ENCODE measurements at regions of chr7 and their contacts with region 1.

Region 1: GRCh38 chr7:47786557-47787248 is 161.6 kb downstream of the PKD1L1 start:
- DNase-seq: peak; percentile 88
- H3K4me3 ChIP-seq: no peak overlapping the region
- H3K27ac ChIP-seq: peak overlapping the region; percentile 79 to 88 (median 82)
- H3K4me1 ChIP-seq: peaks cover 0 to 59% (median 55%) of the 10 kb centered on the region in 4 donors
- H3K27me3 ChIP-seq: no peaks in the 10 kb centered on the region
- CTCF ChIP-seq: no peak
- EP300 ChIP-seq: peak in 1 of 4 donors; percentile 3
- POLR2A ChIP-seq: no peak

Region 2: DNA sequence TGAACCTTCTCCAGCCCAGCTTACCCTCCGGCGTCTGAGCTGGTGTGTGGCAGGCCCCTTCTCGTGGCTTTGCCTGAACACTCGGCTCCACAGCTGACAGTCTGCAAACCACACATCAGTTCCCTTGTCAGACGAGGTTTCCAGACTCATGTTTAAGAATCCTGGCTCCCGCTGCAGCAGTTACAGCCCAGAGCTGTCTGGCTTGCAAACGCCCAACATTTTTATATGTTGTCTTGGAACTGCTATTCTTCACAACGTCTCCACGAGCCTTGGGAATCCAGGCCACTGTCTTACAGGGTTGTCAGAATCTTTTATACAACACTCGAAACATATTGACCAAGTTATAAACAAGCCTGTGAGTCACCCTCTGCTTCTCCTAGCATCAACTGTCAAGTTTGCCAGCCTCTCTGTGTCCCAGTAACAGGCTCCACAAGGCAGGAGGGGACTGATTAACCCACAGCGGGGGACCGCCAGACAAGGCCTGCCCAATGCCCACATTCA is 272.9 kb before region 1 on chr7:
- intact Hi-C with region 1: loop called (anchors 10 kb)
- DNase-seq: peak; percentile 80
- H3K4me3 ChIP-seq: no peak overlapping the region
- H3K27ac ChIP-seq: peak overlapping the region; percentile 45 to 74 (median 72)
- H3K4me1 ChIP-seq: peaks cover 0 to 73% (median 64%) of the 10 kb centered on the region in 4 donors
- H3K27me3 ChIP-seq: no peaks in the 10 kb centered on the region
- CTCF ChIP-seq: no peak
- EP300 ChIP-seq: peak in 1 of 4 donors; percentile 20
- POLR2A ChIP-seq: no peak

Region 3: DNA sequence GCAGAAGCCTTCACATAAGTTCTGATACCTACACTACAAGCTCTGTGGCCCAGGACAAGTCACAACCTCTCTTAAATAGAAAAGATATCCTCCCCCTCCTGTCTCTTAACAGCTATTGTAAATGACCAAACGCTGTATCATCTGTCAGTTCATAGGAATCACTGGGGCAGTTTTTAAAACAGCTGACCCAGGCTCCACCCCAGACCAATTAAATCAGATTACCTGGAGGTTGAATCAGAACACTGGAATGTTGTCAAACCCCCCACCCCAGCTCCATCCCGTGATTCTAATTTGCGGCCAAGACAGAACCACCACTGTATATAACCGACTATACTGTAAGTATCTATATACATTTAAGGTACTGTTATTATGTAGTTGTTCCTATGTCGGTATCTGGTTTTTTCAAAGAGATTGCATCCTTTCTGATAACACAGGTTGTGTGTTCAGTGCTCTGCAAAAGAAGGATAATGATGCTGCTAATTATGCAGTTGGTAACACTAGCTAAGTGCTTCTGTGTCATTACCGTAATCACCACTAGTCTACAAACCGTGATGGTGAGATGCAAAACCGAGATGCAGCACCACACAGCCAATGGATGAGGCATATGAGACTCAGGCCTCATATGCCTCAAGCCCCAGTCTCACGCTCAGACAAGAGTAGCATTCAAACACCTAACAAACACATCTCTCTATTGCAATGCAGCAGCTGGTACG is 252.2 kb before region 1 on chr7:
- intact Hi-C with region 1: no loop called
- DNase-seq: no peak
- H3K4me3 ChIP-seq: no peak overlapping the region
- H3K27ac ChIP-seq: no peak overlapping the region
- H3K4me1 ChIP-seq: peaks cover 0 to 42% (median 30%) of the 10 kb centered on the region in 4 donors
- H3K27me3 ChIP-seq: no peaks in the 10 kb centered on the region
- CTCF ChIP-seq: no peak
- EP300 ChIP-seq: no peak
- POLR2A ChIP-seq: no peak

Region 4: DNA sequence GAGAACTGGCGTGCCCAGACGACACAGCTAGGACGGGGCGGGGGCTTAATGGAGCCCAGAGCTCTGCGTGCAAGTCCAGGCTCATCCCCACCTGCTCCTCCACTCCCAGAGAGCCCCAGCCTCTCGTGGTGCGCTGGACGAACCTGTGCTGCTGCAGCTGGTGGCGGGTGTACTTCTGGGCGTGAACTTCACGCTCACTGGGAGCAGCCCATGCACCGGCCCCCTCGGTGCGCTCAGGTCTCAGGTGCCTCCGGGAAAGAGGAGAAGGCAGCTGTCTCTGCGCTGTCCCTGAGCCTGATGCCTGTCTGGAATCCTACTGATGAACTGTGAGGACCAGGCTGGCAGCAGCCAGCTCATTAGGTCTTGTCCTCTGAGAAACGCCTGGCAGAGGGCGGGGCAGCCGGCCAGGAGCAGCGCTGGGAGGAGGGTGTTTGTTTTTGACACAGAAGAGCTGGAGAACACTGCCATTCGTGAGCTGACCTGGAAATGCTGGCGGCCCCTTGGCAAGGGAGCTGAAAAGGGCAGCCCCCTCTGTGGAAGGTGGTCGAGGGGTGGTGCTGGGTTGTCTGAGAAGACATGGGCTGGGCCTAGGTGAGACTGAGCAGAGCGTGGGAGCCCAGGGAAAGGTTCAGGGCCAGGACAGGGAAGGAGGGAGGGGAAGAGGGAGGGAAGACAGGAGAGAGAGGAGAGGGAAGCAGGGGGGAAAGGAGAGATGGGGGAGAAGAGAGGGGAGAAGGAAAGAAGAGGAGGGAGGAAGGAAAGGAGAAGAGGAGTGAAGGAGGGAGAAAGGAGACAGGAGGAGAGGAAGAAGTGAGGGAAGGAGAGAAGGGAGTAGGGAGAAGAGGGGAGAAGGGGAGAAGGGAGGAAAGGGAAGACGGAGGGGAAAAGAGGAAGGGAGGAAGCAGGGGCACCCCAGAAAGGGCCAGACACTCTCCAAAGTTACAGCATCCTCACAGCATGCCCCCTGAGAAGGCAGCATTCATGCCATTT is 151.3 kb before region 1 on chr7:
- intact Hi-C with region 1: loop called (anchors 10 kb)
- DNase-seq: peak; percentile 80
- H3K4me3 ChIP-seq: no peak overlapping the region
- H3K27ac ChIP-seq: peak overlapping the region; percentile 75 to 88 (median 83)
- H3K4me1 ChIP-seq: peaks cover 0 to 66% (median 58%) of the 10 kb centered on the region in 4 donors
- H3K27me3 ChIP-seq: no peaks in the 10 kb centered on the region
- CTCF ChIP-seq: no peak
- EP300 ChIP-seq: no peak
- POLR2A ChIP-seq: no peak

Region 5: DNA sequence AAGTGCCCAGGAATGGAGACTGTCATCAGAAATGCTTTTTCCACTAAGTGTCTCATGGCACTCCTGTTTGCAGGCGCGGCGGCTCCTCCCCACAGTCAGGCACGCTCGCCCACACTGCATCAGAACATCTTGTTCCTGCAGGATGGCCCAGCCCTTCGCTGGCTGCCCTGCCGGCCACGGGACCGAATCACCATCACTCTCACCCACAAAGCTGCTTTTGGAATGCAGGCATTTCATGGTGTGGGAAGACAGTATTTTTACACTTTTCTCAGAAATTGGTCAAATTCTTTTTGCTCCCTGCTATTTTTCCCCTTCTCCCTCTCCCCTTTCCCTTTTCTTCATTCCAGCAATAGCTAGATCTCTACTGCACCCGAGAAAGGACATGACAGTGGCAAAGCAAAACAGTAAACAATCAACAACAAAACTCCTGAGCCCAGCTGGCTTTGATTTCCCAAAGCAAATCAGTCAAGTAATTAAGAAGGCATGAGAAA is 28.7 kb before region 1 on chr7:
- intact Hi-C with region 1: no loop called
- DNase-seq: no peak
- H3K4me3 ChIP-seq: no peak overlapping the region
- H3K27ac ChIP-seq: peak overlapping the region in 2 of 4 donors; percentile 27 to 39
- H3K4me1 ChIP-seq: peaks cover 0 to 2% (median 1%) of the 10 kb centered on the region in 4 donors
- H3K27me3 ChIP-seq: no peaks in the 10 kb centered on the region
- CTCF ChIP-seq: no peak
- EP300 ChIP-seq: no peak
- POLR2A ChIP-seq: no peak

Region 6: GRCh38 chr7:47827351-47827756 is 40.7 kb after region 1 on chr7:
- intact Hi-C with region 1: no loop called
- DNase-seq: no peak
- H3K4me3 ChIP-seq: no peak overlapping the region
- H3K27ac ChIP-seq: no peak overlapping the region
- H3K4me1 ChIP-seq: no peaks in the 10 kb centered on the region
- H3K27me3 ChIP-seq: no peaks in the 10 kb centered on the region
- CTCF ChIP-seq: no peak
- EP300 ChIP-seq: no peak
- POLR2A ChIP-seq: no peak

Region 7: GRCh38 chr7:47932016-47932415 is 145.3 kb after region 1 on chr7:
- intact Hi-C with region 1: no loop called
- DNase-seq: no peak
- H3K4me3 ChIP-seq: no peak overlapping the region
- H3K27ac ChIP-seq: no peak overlapping the region
- H3K4me1 ChIP-seq: no peaks in the 10 kb centered on the region
- H3K27me3 ChIP-seq: no peaks in the 10 kb centered on the region
- CTCF ChIP-seq: no peak
- EP300 ChIP-seq: no peak
- POLR2A ChIP-seq: no peak